Caco-2 (cell line): ENCODE measurements at regions of chr9 and their contacts with region 1.

Region 1: DNA sequence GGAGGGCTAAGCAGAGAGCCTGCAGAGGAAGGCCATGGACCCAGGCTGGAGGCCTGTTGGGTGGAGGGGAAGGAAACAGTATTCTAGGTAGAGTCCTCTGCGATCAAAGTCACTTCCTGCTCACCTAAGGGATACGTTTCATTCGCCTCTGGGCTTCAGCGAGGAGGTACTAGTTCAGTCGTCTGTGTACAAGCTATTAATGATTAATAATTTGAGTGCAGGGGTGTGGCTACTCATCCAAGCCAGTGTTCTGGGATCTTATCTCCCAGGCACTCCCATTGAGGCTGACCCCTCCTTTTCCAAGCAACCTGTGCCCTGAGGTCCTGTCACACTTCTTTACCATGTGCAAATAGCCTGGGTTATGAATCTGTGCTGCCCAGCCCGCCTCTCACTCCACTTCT is 25.2 kb downstream of the RALGPS1 start:
- DNase-seq: peak; percentile 89 to 94
- H3K4me3 ChIP-seq: peak overlapping the region; percentile 30; the same call in 1 of the 2 replicates
- H3K4me3 Mint-ChIP-seq: peak overlapping the region; percentile 71
- H3K27ac Mint-ChIP-seq: peak overlapping the region; percentile 54
- H3K4me1 ChIP-seq: peaks cover 10% of the 10 kb centered on the region
- H3K4me1 Mint-ChIP-seq: peaks cover 17% of the 10 kb centered on the region
- H3K27me3 ChIP-seq: no peaks in the 10 kb centered on the region
- H3K27me3 Mint-ChIP-seq: no peaks in the 10 kb centered on the region
- CTCF ChIP-seq: no peak

Region 2: DNA sequence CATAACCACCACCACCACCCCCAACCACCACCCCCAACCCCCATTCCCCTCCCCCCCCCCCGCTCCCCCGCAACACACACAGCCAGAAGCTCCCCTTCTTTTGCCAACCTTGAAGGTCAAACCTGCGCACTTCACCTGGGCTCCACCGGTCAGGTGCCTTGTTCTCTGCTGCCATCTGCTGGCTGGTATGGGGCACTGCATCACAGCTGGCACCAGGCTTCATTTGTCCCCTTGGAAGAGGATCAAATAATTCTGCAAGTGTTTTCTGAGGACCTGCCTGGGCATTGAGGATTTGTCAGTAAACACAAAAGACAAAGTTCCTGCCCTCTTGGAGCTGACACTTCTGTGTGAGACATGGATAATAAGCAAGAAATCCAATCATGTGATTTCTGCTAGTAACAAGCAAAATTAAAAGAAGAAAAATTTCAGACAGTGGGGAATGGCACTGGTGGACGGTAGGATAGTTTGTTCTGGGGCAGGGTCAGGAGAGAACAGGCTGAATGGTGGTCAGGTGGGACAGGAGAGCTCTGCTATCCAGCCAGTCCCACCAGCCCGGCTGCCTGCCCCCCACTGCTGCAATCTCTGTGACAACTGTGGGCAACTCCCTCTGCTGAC is 381.7 kb before region 1 on chr9:
- CTCF ChIA-PET with region 1: no interaction called
- POLR2A ChIA-PET with region 1: no interaction called
- intact Hi-C with region 1: no loop called
- DNase-seq: peak; percentile 70 to 78
- H3K4me3 ChIP-seq: no peak overlapping the region
- H3K4me3 Mint-ChIP-seq: no peak overlapping the region
- H3K27ac Mint-ChIP-seq: no peak overlapping the region
- H3K4me1 ChIP-seq: no peaks in the 10 kb centered on the region
- H3K4me1 Mint-ChIP-seq: no peaks in the 10 kb centered on the region
- H3K27me3 ChIP-seq: peaks cover 3% of the 10 kb centered on the region; the same call in 1 of the 2 replicates
- H3K27me3 Mint-ChIP-seq: peaks cover 16% of the 10 kb centered on the region
- CTCF ChIP-seq: peak; percentile 89 to 97

Region 3: GRCh38 chr9:126885131-126885641 is 54.6 kb before region 1 on chr9:
- CTCF ChIA-PET with region 1: no interaction called
- POLR2A ChIA-PET with region 1: no interaction called
- intact Hi-C with region 1: loop called (anchors 2 kb)
- DNase-seq: peak; percentile 81 to 89
- H3K4me3 ChIP-seq: no peak overlapping the region
- H3K4me3 Mint-ChIP-seq: peak overlapping the region; percentile 33
- H3K27ac Mint-ChIP-seq: peak overlapping the region; percentile 89
- H3K4me1 ChIP-seq: peaks cover 21% of the 10 kb centered on the region
- H3K4me1 Mint-ChIP-seq: peaks cover 14% of the 10 kb centered on the region
- H3K27me3 ChIP-seq: no peaks in the 10 kb centered on the region
- H3K27me3 Mint-ChIP-seq: no peaks in the 10 kb centered on the region
- CTCF ChIP-seq: no peak

Region 4: GRCh38 chr9:126914458-126915280 is 25.2 kb before region 1 on chr9 and contains the start of gene RALGPS1:
- CTCF ChIA-PET with region 1: interaction called, 34 read pairs
- POLR2A ChIA-PET with region 1: interaction called, 5 read pairs
- intact Hi-C with region 1: loop called (anchors 1 kb)
- DNase-seq: peak; percentile 96 to 98
- H3K4me3 ChIP-seq: peak within 1 kb of the TSS; percentile 86
- H3K4me3 Mint-ChIP-seq: peak within 1 kb of the TSS; percentile 78
- H3K27ac Mint-ChIP-seq: peak within 1 kb of the TSS; percentile 71
- H3K4me1 ChIP-seq: peaks cover 28% of the 10 kb centered on the region
- H3K4me1 Mint-ChIP-seq: peaks cover 8% of the 10 kb centered on the region
- H3K27me3 ChIP-seq: no peaks in the 10 kb centered on the region
- H3K27me3 Mint-ChIP-seq: peaks cover 7% of the 10 kb centered on the region
- CTCF ChIP-seq: no peak
- total RNA-seq, gene RALGPS1: 41.5 and 43.9 TPM in 2 replicates

Region 5: DNA sequence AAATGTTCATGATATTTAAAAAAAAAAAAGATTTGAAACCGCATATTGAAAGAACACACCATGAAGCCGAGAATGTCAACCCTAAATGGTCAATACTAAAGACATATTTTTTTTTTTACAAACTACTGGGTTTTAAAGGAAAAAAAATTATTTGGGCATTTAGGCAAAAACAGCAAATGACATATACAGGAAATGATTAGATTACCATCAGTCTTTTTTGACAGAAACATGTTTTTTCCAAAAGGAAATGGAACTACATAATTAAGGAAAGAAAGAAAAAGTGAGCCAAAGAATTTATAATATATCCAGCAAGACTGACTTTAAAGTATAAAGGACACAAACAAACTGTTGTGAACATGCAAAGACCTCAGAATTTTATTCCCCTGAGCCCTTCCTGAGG is 31.4 kb after region 1 on chr9:
- CTCF ChIA-PET with region 1: no interaction called
- POLR2A ChIA-PET with region 1: no interaction called
- intact Hi-C with region 1: no loop called
- DNase-seq: no peak
- H3K4me3 ChIP-seq: no peak overlapping the region
- H3K4me3 Mint-ChIP-seq: no peak overlapping the region
- H3K27ac Mint-ChIP-seq: no peak overlapping the region
- H3K4me1 ChIP-seq: no peaks in the 10 kb centered on the region
- H3K4me1 Mint-ChIP-seq: no peaks in the 10 kb centered on the region
- H3K27me3 ChIP-seq: no peaks in the 10 kb centered on the region
- H3K27me3 Mint-ChIP-seq: no peaks in the 10 kb centered on the region
- CTCF ChIP-seq: no peak

Region 6: GRCh38 chr9:127065592-127065991 is 125.8 kb after region 1 on chr9:
- CTCF ChIA-PET with region 1: interaction called, 4 read pairs
- POLR2A ChIA-PET with region 1: no interaction called
- intact Hi-C with region 1: loop called (anchors 2 kb)
- DNase-seq: no peak
- H3K4me3 ChIP-seq: no peak overlapping the region
- H3K4me3 Mint-ChIP-seq: no peak overlapping the region
- H3K27ac Mint-ChIP-seq: peak overlapping the region; percentile 95
- H3K4me1 ChIP-seq: peaks cover 65% of the 10 kb centered on the region
- H3K4me1 Mint-ChIP-seq: peaks cover 32% of the 10 kb centered on the region
- H3K27me3 ChIP-seq: no peaks in the 10 kb centered on the region
- H3K27me3 Mint-ChIP-seq: no peaks in the 10 kb centered on the region
- CTCF ChIP-seq: no peak

Region 7: GRCh38 chr9:127199001-127199791 is 259.4 kb after region 1 on chr9:
- CTCF ChIA-PET with region 1: interaction called, 35 read pairs
- POLR2A ChIA-PET with region 1: no interaction called
- intact Hi-C with region 1: loop called (anchors 1 kb)
- DNase-seq: peak; percentile 78 to 84
- H3K4me3 ChIP-seq: no peak overlapping the region
- H3K4me3 Mint-ChIP-seq: no peak overlapping the region
- H3K27ac Mint-ChIP-seq: peak overlapping the region; percentile 61
- H3K4me1 ChIP-seq: peaks cover 6% of the 10 kb centered on the region; the same call in 1 of the 2 replicates
- H3K4me1 Mint-ChIP-seq: peaks cover 10% of the 10 kb centered on the region
- H3K27me3 ChIP-seq: no peaks in the 10 kb centered on the region
- H3K27me3 Mint-ChIP-seq: no peaks in the 10 kb centered on the region
- CTCF ChIP-seq: peak; percentile 78 to 93

Region 8: DNA sequence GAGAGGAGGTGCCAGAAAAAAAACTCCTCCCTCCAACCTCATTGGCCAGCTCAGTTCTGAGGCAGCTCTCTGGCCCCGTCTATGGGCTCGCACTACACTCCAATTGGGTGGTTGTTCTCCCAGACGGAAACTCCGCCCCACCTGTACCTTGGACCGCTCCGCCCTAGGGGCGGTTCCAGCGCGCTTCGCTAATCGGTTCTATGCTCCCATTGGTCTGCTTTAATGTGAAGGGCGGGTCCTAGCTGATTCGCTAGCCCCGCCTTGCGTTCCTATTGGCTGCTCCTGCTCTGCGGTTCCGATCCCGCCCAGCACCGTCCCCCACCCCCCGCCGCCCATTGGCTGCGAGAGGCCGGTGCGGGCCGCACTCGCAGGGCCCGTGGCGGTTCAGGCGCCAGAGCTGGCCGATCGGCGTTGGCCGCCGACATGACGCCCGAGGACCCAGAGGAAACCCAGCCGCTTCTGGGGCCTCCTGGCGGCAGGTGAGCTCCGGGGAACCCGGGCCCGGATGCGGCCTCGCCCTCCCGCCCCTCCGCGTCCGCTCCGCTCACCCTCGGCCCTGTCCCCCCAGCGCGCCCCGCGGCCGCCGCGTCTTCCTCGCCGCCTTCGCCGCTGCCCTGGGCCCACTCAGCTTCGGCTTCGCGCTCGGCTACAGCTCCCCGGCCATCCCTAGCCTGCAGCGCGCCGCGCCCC is 457.1 kb after region 1 on chr9 and contains the start of gene SLC2A8:
- CTCF ChIA-PET with region 1: interaction called, 7 read pairs
- POLR2A ChIA-PET with region 1: no interaction called
- intact Hi-C with region 1: loop called (anchors 5 kb)
- DNase-seq: peak; percentile 99 to 100
- H3K4me3 ChIP-seq: peak within 1 kb of the TSS; percentile 92
- H3K4me3 Mint-ChIP-seq: peak within 1 kb of the TSS; percentile 97
- H3K27ac Mint-ChIP-seq: peak within 1 kb of the TSS; percentile 93
- H3K4me1 ChIP-seq: peaks cover 40% of the 10 kb centered on the region
- H3K4me1 Mint-ChIP-seq: peaks cover 18% of the 10 kb centered on the region
- H3K27me3 ChIP-seq: no peaks in the 10 kb centered on the region
- H3K27me3 Mint-ChIP-seq: no peaks in the 10 kb centered on the region
- CTCF ChIP-seq: peak; percentile 36 to 47
- total RNA-seq, gene SLC2A8: 141 and 144 TPM in 2 replicates